ENCODE measurements at regions of chr1 and their contacts with region 1.

Region 1: GRCh38 chr1:46446646-46447498 is 42.8 kb upstream of the DMBX1 start:
- DNase-seq: peak; percentile 10
- H3K4me3 ChIP-seq: no peak overlapping the region
- H3K27ac ChIP-seq: no peak overlapping the region
- H3K27me3 ChIP-seq: peaks cover 68% of the 10 kb centered on the region
- CTCF ChIP-seq: peak; percentile 87

Region 2: GRCh38 chr1:46458190-46458589 is 11.3 kb after region 1 on chr1:
- CTCF ChIA-PET with region 1: interaction called, 14 read pairs
- POLR2A ChIA-PET with region 1: no interaction called
- DNase-seq: no peak
- H3K4me3 ChIP-seq: no peak overlapping the region
- H3K27ac ChIP-seq: no peak overlapping the region
- H3K27me3 ChIP-seq: peaks cover 67% of the 10 kb centered on the region
- CTCF ChIP-seq: no peak

Region 3: DNA sequence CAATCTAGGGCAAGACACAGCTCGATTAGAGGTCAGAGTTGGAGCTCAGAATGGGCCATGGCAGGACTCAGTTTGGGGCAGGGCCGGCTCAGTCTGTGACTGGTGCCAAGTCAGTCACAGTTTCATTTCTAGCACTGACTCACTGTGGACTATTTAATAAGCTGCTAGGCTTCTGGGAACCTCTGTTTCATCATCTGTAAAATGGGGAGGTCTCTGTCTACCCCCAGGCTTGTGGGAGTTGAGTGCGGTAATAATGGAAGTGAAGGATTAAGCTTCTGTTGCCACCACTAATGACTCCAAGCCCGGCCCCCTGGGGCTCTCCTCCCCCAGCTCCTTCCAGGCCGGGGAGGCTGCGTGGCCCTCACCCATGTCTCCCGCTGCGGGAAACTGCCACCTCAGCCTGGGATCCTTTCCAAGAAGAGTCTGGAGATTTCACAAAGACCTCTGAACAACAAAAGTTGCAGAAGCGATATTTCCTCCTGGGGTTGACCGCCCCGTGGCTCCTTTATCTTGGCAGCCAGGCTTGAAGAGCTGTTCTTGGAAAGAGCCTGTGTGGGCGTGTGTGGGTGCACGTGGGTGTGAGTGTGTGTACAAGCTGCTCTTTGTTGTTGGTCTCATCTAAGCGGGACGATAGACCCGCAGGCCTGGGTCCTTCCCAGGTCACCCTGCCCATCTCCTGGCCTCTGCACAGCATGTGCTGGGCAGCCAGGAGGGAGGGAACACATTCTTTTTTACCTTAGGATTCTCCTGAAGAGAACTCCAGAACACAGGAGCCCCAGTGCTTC is 75.5 kb after region 1 on chr1:
- CTCF ChIA-PET with region 1: interaction called, 159 read pairs
- POLR2A ChIA-PET with region 1: no interaction called
- DNase-seq: no peak
- H3K4me3 ChIP-seq: no peak overlapping the region
- H3K27ac ChIP-seq: peak overlapping the region; percentile 21
- H3K27me3 ChIP-seq: peaks cover 25% of the 10 kb centered on the region
- CTCF ChIP-seq: no peak

Region 4: GRCh38 chr1:46547481-46548383 is 100.9 kb after region 1 on chr1:
- CTCF ChIA-PET with region 1: interaction called, 34 read pairs
- POLR2A ChIA-PET with region 1: no interaction called
- DNase-seq: no peak
- H3K4me3 ChIP-seq: peak overlapping the region; percentile 17; the same call in 1 of the 2 replicates
- H3K27ac ChIP-seq: no peak overlapping the region
- H3K27me3 ChIP-seq: peaks cover 63% of the 10 kb centered on the region
- CTCF ChIP-seq: peak; percentile 57

Measured in AG04450 (cell line).